ENCODE measurements at regions of chr1 and their contacts with region 1.

Region 1: DNA sequence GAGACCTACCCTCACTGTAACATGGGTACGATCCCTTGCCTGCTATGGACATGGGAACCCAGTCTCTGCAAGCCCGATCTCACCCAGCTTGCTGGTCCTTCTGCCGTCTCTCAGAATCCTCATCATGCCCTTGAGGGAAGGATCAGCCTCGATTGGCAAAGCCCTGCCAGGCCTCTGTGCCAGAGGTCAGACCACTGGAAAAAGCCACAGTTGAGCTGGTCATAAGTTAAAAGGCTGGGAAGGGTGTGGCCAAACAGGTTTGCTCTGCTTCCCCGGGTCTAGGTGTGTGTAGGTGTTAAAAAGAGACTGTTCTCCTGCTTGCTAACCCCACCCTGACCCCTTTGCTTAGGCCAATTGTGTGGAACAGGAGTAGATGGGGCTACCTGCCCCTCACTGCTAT is 19.5 kb upstream of the PADI3 start:
- DNase-seq: no peak
- ATAC-seq: no peak
- H3K4me3 ChIP-seq: no peak overlapping the region
- H3K27ac ChIP-seq: no peak overlapping the region
- H3K4me1 ChIP-seq: no peaks in the 10 kb centered on the region
- H3K27me3 ChIP-seq: peaks cover 0 to 23% of the 10 kb centered on the region in 2 donors
- CTCF ChIP-seq: no peak

Region 2: DNA sequence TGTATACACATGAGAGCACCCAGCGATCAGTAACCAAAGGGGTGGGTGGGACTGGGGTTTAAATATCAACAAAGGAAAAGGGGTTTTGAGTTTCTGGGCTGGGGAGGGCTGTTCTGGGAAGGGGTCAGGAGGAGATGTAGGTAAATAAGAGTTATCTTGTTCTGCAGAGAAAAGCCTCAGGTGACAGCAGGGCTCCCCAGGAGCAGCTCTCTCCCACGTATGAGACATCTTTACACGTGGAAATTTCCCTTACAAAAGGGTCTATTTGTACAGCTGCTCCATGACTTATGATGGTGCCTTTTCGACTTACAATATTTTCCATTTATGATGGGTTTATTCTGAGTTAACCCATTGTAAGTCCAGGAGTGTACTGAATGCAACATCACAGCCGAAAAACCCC is 93.9 kb before region 1 on chr1:
- intact Hi-C with region 1: loop called in 1 of 2 experiments (anchors 10 kb)
- DNase-seq: no peak
- ATAC-seq: no peak
- H3K4me3 ChIP-seq: no peak overlapping the region
- H3K27ac ChIP-seq: no peak overlapping the region
- H3K4me1 ChIP-seq: no peaks in the 10 kb centered on the region
- H3K27me3 ChIP-seq: peaks cover 0 to 32% of the 10 kb centered on the region in 2 donors
- CTCF ChIP-seq: no peak

Measured in left lung (tissue), 14 donors.